Calu3 (cell line): ENCODE measurements at regions of chr4 and their contacts with region 1.

Region 1: DNA sequence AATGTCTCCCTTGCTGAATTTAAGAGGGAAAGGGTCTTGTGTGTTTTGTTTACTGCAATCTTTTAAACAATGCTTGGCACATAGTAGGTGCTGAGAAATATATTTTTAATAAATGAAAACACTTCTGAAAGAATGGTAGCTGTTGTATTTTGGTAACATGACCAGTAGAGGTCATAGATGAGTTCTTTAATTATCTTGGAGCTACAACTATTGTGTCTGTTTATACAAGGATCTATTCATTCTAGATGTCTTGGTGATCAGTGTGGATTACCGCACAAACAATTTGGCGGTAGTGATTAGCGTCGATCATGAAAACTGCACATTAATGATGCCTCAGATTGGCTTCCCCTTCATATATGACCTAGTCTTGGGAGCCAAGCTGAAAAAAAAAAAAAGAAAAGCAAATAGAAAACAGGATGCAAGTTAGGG is 21.4 kb upstream of the SCRG1 start:
- DNase-seq: no peak
- H3K4me3 Mint-ChIP-seq: no peak overlapping the region
- H3K27ac Mint-ChIP-seq: no peak overlapping the region
- H3K4me1 Mint-ChIP-seq: no peaks in the 10 kb centered on the region
- H3K27me3 Mint-ChIP-seq: no peaks in the 10 kb centered on the region
- CTCF ChIP-seq: no peak

Region 2: DNA sequence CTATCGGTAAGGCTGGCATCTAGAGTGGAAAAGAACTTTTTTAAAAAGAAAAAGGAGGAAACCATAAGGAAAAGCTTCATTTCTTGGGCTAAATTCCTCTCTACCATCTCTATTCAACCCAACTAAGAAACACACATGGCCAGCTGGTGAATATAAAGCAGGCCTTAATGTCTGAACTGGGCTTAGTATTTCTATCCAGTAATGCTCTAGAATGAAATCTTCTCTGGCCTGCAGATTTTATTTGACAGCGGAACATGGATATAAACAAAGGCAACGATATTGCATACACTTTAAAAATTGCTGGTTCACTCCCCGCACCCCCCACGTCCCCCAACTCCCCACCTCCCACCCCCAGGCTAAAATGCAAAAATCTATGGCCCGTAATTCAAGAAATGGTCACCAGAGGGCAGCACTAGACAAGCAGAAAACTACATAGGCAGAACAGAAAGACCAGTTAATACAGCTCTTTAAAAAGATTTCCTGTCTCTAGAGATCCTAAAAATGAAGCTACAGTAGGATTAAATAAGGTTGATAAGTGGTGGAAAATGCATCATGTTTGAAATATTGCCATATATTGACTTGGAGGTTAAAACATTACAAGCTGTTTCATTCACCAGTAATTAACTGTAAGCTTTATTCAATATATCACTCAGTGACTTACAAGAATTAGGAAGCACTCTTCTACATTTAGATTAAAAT is 407.0 kb before region 1 on chr4:
- CTCF ChIA-PET with region 1: interaction called, 9 read pairs
- intact Hi-C with region 1: loop called (anchors 5 kb)
- DNase-seq: peak; percentile 34
- H3K4me3 Mint-ChIP-seq: no peak overlapping the region
- H3K27ac Mint-ChIP-seq: no peak overlapping the region
- H3K4me1 Mint-ChIP-seq: no peaks in the 10 kb centered on the region
- H3K27me3 Mint-ChIP-seq: no peaks in the 10 kb centered on the region
- CTCF ChIP-seq: peak; percentile 24

Region 3: DNA sequence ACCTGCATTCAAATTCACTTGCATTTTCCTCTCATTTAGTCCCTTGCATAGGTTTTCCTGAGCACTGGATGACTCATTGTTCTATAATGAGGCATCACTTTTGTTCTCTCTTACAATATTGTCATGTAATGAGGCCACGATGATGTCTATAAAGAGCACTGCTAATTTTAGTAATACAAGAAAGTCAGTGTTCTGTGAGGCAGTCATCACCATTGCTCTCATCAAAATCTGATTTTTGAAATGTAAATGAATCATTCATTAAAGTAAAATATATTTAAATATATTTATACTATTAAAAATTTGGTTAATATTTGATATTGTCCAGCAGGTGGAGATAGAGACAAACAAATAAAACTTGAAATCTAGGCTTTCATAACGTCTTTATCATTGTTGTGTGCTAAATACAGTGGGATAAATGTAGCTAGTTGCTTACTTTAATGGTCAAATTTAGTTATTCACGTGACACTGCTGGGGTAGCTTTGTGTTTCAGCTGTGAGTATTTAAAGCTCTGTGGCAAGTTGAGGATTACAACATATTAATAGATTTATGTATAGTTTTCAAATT is 101.6 kb before region 1 on chr4:
- CTCF ChIA-PET with region 1: interaction called, 3 read pairs
- intact Hi-C with region 1: loop called (anchors 1 kb)
- DNase-seq: no peak
- H3K4me3 Mint-ChIP-seq: no peak overlapping the region
- H3K27ac Mint-ChIP-seq: no peak overlapping the region
- H3K4me1 Mint-ChIP-seq: no peaks in the 10 kb centered on the region
- H3K27me3 Mint-ChIP-seq: no peaks in the 10 kb centered on the region
- CTCF ChIP-seq: peak; percentile 11

Region 4: DNA sequence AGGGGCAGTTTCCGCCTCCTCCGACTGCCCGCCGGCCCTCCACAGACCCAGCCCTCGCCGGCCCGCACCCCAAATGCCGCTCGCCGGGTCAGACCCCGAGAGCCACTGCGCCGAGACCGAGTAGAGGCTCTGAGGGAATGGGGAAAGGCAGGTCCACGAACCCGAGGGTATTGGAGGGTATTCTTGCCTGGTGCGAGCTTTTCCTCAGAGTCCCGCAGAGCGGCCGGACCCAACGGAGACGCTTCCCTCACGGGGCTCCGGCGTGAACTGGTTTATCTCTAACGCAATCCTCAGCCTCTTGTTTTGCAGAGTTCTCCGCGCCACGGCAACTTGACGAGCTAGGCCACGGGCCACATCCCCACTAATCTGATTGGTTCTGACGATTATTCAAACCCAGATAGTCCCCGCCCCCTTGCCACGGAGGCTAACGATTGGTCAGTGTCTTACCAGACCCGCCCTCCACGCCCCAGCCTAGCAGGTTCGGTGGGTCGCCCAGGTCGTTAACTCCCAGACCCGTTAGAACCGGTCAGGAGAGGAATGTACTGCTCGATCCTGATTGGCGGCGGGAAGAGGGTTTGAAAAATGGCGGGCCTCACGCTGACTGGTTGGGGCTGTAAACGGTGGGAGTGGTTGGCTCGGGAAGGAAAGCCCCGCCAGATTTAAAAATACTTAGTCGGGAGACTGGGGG is 86.1 kb before region 1 on chr4 and contains the start of gene HMGB2:
- CTCF ChIA-PET with region 1: interaction called, 4 read pairs
- intact Hi-C with region 1: loop called (anchors 5 kb)
- DNase-seq: peak; percentile 98
- H3K4me3 Mint-ChIP-seq: peak within 1 kb of the TSS; percentile 93
- H3K27ac Mint-ChIP-seq: peak within 1 kb of the TSS; percentile 60
- H3K4me1 Mint-ChIP-seq: peaks cover 19% of the 10 kb centered on the region
- H3K27me3 Mint-ChIP-seq: no peaks in the 10 kb centered on the region
- CTCF ChIP-seq: no peak
- total RNA-seq, gene HMGB2: 108 and 128 TPM in 2 replicates

Region 5: DNA sequence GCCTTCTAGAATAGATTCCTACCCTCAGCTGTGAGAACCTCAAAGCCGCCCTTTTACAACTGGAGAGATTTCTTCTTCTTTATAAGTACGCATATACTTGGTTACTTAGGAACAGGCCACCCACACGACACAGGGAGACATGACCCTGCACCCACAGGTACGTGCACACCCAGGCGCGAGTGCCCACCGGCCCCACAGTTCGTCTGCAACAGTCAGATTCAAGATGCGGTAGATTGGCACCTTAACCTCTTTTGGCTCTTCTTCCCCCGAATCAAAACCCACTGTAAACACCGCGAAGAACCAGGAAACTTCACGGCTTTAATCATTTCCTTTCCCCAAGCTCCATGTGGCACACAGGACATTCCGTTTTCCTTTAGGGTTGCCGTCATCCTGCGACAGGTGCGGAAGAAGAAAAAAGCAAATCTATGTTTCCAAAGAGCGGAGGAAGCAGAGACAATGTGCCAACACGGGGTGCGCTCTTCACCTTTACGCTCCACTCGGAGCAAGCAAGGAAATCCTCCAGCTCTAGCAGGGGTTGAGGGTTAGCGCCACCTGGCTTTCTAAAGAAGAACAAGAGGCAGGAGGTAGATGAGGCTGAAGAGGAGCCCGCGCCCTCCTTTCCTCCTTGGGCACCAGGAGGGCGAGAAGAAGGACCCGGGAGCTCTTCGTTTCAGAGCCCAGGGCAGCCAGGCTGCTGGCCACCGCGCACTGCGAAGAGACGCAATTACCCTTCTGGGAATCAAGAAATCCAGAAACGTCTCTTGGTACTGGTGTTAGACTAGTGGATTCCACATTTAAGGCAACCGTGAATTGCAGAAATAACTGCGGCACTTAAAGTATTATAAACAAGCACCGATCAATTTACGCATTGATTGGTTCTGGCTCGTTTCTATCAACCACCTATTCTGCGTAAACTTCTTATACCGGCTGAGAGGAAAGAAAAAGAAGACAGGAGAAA is 74.0 kb after region 1 on chr4:
- CTCF ChIA-PET with region 1: interaction called, 14 read pairs
- intact Hi-C with region 1: loop called (anchors 1 kb)
- DNase-seq: peak; percentile 58
- H3K4me3 Mint-ChIP-seq: peak overlapping the region; percentile 79
- H3K27ac Mint-ChIP-seq: no peak overlapping the region
- H3K4me1 Mint-ChIP-seq: peaks cover 14% of the 10 kb centered on the region
- H3K27me3 Mint-ChIP-seq: no peaks in the 10 kb centered on the region
- CTCF ChIP-seq: peak; percentile 71

Region 6: GRCh38 chr4:173748353-173748752 is 328.0 kb after region 1 on chr4:
- CTCF ChIA-PET with region 1: no interaction called
- intact Hi-C with region 1: loop called (anchors 5 kb)
- DNase-seq: no peak
- H3K4me3 Mint-ChIP-seq: no peak overlapping the region
- H3K27ac Mint-ChIP-seq: no peak overlapping the region
- H3K4me1 Mint-ChIP-seq: no peaks in the 10 kb centered on the region
- H3K27me3 Mint-ChIP-seq: no peaks in the 10 kb centered on the region
- CTCF ChIP-seq: no peak

Region 7: GRCh38 chr4:174156239-174156826 is 736.0 kb after region 1 on chr4:
- CTCF ChIA-PET with region 1: no interaction called
- intact Hi-C with region 1: loop called (anchors 2 kb)
- DNase-seq: peak; percentile 2
- H3K4me3 Mint-ChIP-seq: no peak overlapping the region
- H3K27ac Mint-ChIP-seq: no peak overlapping the region
- H3K4me1 Mint-ChIP-seq: no peaks in the 10 kb centered on the region
- H3K27me3 Mint-ChIP-seq: no peaks in the 10 kb centered on the region
- CTCF ChIP-seq: no peak